ENCODE measurements at regions of chr10 and their contacts with region 1.

Region 1: DNA sequence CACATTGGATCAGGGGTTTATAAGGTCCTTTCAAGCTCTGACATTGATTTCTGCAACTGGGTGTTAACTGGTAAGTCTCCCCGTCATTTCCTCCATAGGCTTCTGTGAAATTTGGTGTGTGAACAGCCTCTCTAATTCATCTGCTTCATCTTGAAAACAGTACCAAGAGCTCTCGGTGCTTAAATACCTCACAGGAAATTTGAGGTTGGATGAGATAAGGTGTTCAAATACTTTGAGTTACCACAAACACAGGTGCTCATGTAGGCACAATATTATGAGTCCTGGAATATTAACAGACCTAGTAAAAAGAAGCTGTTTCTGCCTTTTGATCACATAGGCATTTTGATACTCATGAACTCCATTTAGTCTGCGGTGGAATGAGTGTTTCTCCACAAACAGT is 85.2 kb downstream of the RTKN2 start:
- DNase-seq: peak; percentile 59
- ATAC-seq: peak; percentile 21
- H3K4me3 ChIP-seq: no peak overlapping the region
- H3K27ac ChIP-seq: peak overlapping the region; percentile 16
- H3K4me1 ChIP-seq: peaks cover 20% of the 10 kb centered on the region
- H3K27me3 ChIP-seq: no peaks in the 10 kb centered on the region
- CTCF ChIP-seq: no peak

Region 2: DNA sequence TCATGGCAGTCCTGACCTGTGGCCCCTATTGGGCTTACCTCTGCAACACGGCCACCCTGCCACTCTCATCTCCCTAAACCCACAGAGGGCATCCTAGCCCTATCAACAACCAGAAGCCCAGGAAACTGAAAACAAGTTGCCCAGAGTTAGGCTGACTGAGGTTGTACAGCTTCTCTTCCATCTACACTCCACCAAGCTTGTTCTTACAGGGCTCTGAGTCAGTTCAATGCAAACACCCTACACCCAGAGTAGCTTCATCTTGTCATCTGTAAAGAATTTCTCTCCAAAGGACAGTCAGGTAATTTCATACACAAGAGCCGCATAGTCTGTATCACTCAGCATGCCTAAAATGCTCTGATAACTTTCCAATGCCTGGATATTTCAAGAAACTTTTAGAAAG is 106.6 kb before region 1 on chr10:
- CTCF ChIA-PET with region 1: interaction called, 4 read pairs
- POLR2A ChIA-PET with region 1: no interaction called
- intact Hi-C with region 1: loop called (anchors 1 kb)
- DNase-seq: peak; percentile 100
- ATAC-seq: peak; percentile 99
- H3K4me3 ChIP-seq: peak overlapping the region; percentile 31
- H3K27ac ChIP-seq: peak overlapping the region; percentile 61
- H3K4me1 ChIP-seq: peaks cover 45% of the 10 kb centered on the region
- H3K27me3 ChIP-seq: no peaks in the 10 kb centered on the region
- CTCF ChIP-seq: peak; percentile 95

Region 3: GRCh38 chr10:62095181-62096071 is 88.0 kb before region 1 on chr10:
- CTCF ChIA-PET with region 1: no interaction called
- POLR2A ChIA-PET with region 1: no interaction called
- intact Hi-C with region 1: loop called (anchors 5 kb)
- DNase-seq: peak; percentile 97
- ATAC-seq: peak; percentile 50
- H3K4me3 ChIP-seq: peak overlapping the region; percentile 43
- H3K27ac ChIP-seq: peak overlapping the region; percentile 57
- H3K4me1 ChIP-seq: peaks cover 43% of the 10 kb centered on the region
- H3K27me3 ChIP-seq: no peaks in the 10 kb centered on the region
- CTCF ChIP-seq: no peak

Region 4: GRCh38 chr10:62136899-62137298 is 46.5 kb before region 1 on chr10:
- CTCF ChIA-PET with region 1: no interaction called
- POLR2A ChIA-PET with region 1: no interaction called
- intact Hi-C with region 1: loop called (anchors 5 kb)
- DNase-seq: peak; percentile 100
- ATAC-seq: peak; percentile 85
- H3K4me3 ChIP-seq: no peak overlapping the region
- H3K27ac ChIP-seq: peak overlapping the region; percentile 76
- H3K4me1 ChIP-seq: peaks cover 25% of the 10 kb centered on the region
- H3K27me3 ChIP-seq: no peaks in the 10 kb centered on the region
- CTCF ChIP-seq: no peak